Right cardiac atrium (tissue), 5 donors: ENCODE measurements at regions of chr3 and their contacts with region 1.

Region 1: GRCh38 chr3:194249323-194250097 is 101.6 kb downstream of the CPN2 start:
- DNase-seq: peak in 1 of 3 donors; percentile 66
- ATAC-seq: no peak
- H3K4me3 ChIP-seq: no peak overlapping the region
- H3K27ac ChIP-seq: no peak overlapping the region
- H3K4me1 ChIP-seq: peaks cover 3% of the 10 kb centered on the region
- H3K27me3 ChIP-seq: no peaks in the 10 kb centered on the region

Region 2: DNA sequence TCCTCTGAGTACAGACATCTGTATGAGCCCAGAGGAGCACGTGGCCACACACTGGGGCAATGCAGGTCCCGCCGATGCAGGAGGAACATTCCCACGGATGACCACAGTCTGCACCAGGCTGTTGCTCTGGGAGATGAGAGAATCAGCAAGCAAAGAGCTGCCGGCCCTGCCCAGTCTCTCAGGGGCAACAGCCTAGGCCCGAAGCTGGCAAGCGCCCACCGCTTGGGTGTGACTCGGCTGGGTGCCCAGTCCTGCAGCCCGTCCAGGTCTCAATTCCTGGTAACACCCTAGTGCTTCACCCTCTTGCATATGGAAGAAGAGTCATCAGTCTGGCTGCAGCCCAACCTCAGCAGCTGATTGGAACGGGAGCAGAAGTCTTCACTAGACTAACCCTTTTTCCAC is 267.3 kb before region 1 on chr3:
- intact Hi-C with region 1: no loop called
- DNase-seq: peak; percentile 90 to 93 (median 91)
- ATAC-seq: peak; percentile 75 to 85
- H3K4me3 ChIP-seq: no peak overlapping the region
- H3K27ac ChIP-seq: no peak overlapping the region
- H3K4me1 ChIP-seq: peaks cover 10% of the 10 kb centered on the region
- H3K27me3 ChIP-seq: no peaks in the 10 kb centered on the region

Region 3: GRCh38 chr3:194166682-194167479 is 82.6 kb before region 1 on chr3:
- intact Hi-C with region 1: loop called in 1 of 4 experiments (anchors 10 kb)
- DNase-seq: peak; percentile 64 to 85 (median 78)
- ATAC-seq: peak; percentile 76 to 92
- H3K4me3 ChIP-seq: no peak overlapping the region
- H3K27ac ChIP-seq: no peak overlapping the region
- H3K4me1 ChIP-seq: peaks cover 4% of the 10 kb centered on the region
- H3K27me3 ChIP-seq: no peaks in the 10 kb centered on the region